Activated B cell treated with CpG ODN at 0.5 μM for 24 hours (primary cell): ENCODE measurements at regions of chr7 and their contacts with region 1.

Region 1: GRCh38 chr7:20598459-20599309 is 16.8 kb upstream of the ABCB5 start:
- DNase-seq: no peak
- ATAC-seq: peak; percentile 75
- H3K4me3 Mint-ChIP-seq: no peak overlapping the region
- H3K27ac Mint-ChIP-seq: no peak overlapping the region
- H3K4me1 Mint-ChIP-seq: peaks cover 4% of the 10 kb centered on the region
- H3K27me3 Mint-ChIP-seq: peaks cover 21% of the 10 kb centered on the region
- CTCF ChIP-seq: peak; percentile 84

Region 2: DNA sequence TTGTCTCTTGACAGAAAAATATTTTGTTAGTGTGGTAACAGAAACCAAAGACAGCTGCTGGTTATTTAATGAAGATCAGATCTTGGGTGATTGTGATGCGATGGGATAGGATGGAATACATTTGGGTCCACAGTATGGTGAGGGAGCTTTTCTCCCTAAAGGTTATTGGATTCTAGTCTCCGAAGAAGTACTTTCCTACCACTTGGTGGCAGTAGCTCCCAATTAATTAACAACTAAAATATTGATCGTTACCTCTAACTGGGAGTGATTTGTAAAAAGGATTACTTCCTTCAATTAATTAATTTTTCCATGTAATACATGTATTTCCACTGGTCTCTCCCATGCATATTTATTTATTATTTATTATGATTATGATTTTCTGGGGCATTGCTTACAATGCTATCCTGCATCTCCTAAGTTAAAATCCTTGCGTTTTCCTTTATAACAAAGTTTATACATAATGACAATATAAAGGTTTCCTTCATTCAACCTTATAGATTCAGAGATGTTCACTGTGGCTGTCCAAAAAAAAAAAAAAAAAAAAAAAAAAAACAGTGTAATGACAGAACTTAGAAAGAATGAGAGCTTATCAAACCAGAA is 850.8 kb before region 1 on chr7:
- CTCF ChIA-PET with region 1: interaction called, 95 read pairs
- POLR2A ChIA-PET with region 1: no interaction called
- intact Hi-C with region 1: loop called (anchors 1 kb)
- DNase-seq: no peak
- ATAC-seq: peak; percentile 25
- H3K4me3 Mint-ChIP-seq: no peak overlapping the region
- H3K27ac Mint-ChIP-seq: no peak overlapping the region
- H3K4me1 Mint-ChIP-seq: no peaks in the 10 kb centered on the region
- H3K27me3 Mint-ChIP-seq: peaks cover 6% of the 10 kb centered on the region
- CTCF ChIP-seq: no peak

Region 3: DNA sequence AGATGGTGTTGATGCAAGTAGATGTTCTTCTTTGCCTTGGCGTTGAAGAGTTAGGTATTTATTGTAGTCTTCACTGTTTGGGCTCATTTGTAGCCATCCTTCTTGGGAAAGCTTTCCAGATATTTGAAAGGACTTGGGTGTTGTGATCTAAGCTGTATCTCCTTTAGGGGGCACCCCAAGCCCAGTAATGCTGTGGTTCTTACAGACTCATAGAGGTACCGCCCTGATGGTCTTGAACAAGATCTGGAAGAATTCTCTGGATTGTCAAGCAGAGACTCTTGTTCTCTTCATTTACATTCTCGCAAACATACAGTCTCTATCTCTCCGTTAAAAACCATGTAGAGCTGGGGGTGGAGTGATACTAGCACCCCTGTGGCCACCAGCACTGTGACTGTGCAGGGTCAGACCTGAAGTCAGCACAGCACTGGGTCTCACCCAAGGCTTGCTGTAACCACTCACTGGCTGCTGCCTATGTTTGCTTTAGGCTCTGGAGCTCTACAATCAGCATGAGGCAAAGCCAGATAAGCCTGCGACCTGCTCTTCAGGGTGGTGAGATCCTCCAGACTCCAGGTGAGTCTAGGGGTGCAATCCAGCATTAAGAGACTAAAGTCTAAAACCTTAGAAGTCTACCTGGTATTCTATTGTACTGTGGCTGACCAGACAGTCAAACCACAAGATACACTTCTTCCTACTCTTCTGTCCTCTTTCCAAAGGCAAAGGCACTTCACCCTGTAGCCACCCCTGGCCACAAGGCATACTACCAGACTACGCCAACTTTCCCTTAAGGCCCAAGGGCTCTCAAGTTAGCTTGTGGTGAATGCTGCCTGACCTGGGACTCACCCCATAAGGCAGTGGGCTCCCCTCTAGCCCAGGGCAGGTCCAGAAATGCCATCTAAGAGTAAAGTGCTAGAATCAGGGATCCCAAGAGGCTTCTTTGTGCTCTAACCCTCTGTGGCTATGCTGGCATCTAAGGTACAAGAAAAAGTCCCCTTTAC is 615.5 kb before region 1 on chr7:
- CTCF ChIA-PET with region 1: interaction called, 55 read pairs
- POLR2A ChIA-PET with region 1: no interaction called
- intact Hi-C with region 1: loop called (anchors 1 kb)
- DNase-seq: no peak
- ATAC-seq: peak; percentile 50
- H3K4me3 Mint-ChIP-seq: no peak overlapping the region
- H3K27ac Mint-ChIP-seq: no peak overlapping the region
- H3K4me1 Mint-ChIP-seq: no peaks in the 10 kb centered on the region
- H3K27me3 Mint-ChIP-seq: no peaks in the 10 kb centered on the region
- CTCF ChIP-seq: no peak

Region 4: DNA sequence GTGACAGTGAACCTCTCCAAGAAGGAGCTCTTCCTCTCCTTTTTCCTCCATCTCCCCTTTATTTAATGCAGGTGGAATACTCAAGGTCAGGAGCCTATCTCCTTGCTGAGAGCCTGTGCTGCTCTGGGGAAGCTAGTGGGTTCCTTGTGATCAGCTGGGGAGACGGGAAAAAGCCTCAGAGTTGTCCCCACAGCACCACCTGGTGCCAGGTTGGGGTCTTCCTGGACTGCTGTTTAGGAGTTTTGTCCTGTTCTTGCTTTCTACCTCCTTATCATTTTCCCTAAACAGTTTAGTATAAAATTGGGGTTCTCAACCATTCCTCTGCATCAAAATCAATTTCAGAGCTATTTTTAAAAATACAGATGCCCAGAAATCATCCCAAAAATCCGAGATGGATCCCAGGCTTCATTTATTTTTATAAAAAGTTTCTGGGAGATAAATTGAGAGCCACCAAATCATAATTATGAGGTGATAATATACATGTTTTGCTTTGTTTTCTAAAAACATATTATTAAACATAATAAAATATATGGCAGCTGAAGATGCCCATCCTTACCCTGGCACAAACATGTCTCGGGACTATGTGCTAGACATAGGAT is 425.8 kb before region 1 on chr7:
- CTCF ChIA-PET with region 1: interaction called, 6 read pairs
- POLR2A ChIA-PET with region 1: no interaction called
- intact Hi-C with region 1: loop called (anchors 5 kb)
- DNase-seq: peak; percentile 27
- ATAC-seq: peak; percentile 61
- H3K4me3 Mint-ChIP-seq: no peak overlapping the region
- H3K27ac Mint-ChIP-seq: no peak overlapping the region
- H3K4me1 Mint-ChIP-seq: peaks cover 11% of the 10 kb centered on the region
- H3K27me3 Mint-ChIP-seq: no peaks in the 10 kb centered on the region
- CTCF ChIP-seq: no peak

Region 5: DNA sequence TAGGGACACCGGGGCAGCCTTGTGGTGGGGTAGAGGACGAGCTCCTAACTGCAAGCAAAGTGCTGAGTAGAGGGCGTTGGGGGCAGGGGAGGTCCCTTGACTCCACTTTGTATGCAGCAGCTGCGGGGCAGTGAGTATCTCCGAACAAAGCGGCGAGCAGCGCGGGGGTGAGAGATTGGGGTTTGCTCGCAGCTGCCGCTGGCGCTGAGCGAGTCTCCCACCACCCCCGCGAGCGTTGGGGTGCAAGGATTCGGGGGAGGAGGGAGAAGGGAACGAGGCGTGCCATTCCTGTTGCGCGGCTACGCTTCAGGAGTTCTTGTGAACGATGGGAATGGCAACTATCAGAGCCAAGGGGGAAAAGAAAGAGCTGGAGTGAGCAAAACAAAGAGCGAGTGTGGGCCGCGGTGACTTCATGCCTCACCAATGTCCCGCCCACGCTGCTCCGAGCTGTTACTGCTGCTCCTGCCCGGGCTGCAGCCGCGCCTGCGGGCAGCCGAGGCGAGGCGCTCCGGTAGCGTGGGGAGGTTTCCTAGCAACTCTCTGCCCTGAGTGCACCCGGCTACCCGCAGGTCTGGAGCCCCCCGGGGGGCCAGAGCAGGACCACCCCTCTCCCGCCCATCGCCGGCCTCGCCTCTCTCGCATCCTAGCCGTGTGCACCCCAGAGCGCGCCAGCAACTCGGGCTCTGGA is 268.3 kb before region 1 on chr7 and contains the start of gene ITGB8:
- CTCF ChIA-PET with region 1: interaction called, 3 read pairs
- POLR2A ChIA-PET with region 1: no interaction called
- intact Hi-C with region 1: loop called (anchors 2 kb)
- DNase-seq: no peak
- ATAC-seq: peak; percentile 69
- H3K4me3 Mint-ChIP-seq: peak within 1 kb of the TSS; percentile 95
- H3K27ac Mint-ChIP-seq: peak within 1 kb of the TSS; percentile 84
- H3K4me1 Mint-ChIP-seq: peaks cover 37% of the 10 kb centered on the region
- H3K27me3 Mint-ChIP-seq: peaks cover 2% of the 10 kb centered on the region
- CTCF ChIP-seq: no peak
- total RNA-seq, gene ITGB8: 0.75 and 1.3 TPM in 2 replicates

Region 6: GRCh38 chr7:21507626-21508343 is 909.1 kb after region 1 on chr7:
- CTCF ChIA-PET with region 1: no interaction called
- POLR2A ChIA-PET with region 1: no interaction called
- intact Hi-C with region 1: loop called (anchors 2 kb)
- DNase-seq: no peak
- ATAC-seq: no peak
- H3K4me3 Mint-ChIP-seq: no peak overlapping the region
- H3K27ac Mint-ChIP-seq: no peak overlapping the region
- H3K4me1 Mint-ChIP-seq: no peaks in the 10 kb centered on the region
- H3K27me3 Mint-ChIP-seq: no peaks in the 10 kb centered on the region
- CTCF ChIP-seq: no peak